Activated CD4-positive, alpha-beta memory T cell treated with anti-CD3 and anti-CD28 coated beads for 36 hours (primary cell): ENCODE measurements at regions of chr13 and their contacts with region 1.

Region 1: DNA sequence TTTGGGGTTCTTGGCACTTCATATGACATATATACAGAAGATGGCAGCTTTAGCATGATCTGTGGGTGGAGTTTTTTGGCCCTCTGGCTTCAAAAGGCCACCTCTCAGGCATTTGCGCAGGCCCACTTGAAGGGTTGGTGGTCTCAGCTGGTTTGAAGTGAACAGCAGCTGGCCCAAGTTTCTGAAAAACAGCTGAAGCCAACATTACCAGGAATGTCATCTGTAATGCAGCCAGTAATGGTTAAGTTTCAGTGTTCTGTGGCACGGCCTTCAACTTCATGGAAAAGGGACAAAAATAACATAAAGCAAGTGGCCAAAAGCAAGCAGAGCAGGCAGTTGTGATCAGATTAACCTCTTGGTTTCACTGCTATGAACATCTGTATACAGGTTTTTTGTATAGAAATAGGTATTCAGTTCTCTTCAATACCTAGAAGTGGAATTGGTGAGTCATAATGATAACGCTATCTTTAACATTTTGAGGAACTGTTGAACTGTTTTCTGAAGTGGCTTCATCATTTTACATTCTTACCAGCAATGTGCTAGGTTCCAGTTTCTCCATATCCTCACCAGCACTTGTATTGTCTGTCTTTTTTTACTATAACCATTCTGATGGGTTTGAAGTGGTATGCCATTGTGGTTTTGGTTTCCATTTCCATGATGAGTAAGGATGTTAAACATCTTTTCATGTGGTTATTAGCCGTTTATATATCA is 245.4 kb downstream of the SHISA2 start:
- DNase-seq: no peak
- H3K4me3 Mint-ChIP-seq: no peak overlapping the region
- H3K27ac Mint-ChIP-seq: no peak overlapping the region
- H3K4me1 Mint-ChIP-seq: peaks cover 9% of the 10 kb centered on the region
- H3K27me3 Mint-ChIP-seq: peaks cover 18% of the 10 kb centered on the region

Region 2: DNA sequence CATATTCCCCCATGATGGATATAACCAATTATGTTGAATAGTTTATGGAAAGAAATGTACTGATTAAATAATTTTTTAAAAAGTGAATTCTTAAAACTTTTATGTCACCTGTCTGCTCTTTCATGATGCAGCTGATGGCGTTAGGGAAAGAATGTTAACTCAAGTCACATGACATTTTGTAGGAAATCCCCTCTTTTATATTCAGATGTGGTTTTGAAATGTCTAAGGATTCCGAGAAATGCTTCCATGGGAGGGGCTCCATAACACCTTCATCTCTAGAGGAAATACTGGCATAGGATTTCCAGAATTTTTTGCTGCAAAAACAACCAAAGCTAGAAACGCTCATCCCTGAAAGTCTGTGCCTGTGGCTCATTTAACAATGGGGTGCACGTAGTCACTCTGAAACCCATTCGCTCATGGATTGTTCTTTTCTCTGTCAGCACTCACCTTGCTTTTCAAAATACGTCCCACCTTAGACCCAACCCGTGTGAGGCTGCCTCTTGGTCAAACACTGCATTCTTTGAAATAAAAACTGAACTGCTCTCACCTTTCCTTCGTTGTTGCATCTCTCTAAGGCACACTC is 43.5 kb before region 1 on chr13:
- CTCF ChIA-PET with region 1: no interaction called
- POLR2A ChIA-PET with region 1: no interaction called
- intact Hi-C with region 1: loop called (anchors 1 kb)
- DNase-seq: peak; percentile 11
- H3K4me3 Mint-ChIP-seq: no peak overlapping the region
- H3K27ac Mint-ChIP-seq: no peak overlapping the region
- H3K4me1 Mint-ChIP-seq: peaks cover 17% of the 10 kb centered on the region
- H3K27me3 Mint-ChIP-seq: no peaks in the 10 kb centered on the region

Region 3: GRCh38 chr13:25784119-25784518 is 22.3 kb before region 1 on chr13:
- CTCF ChIA-PET with region 1: no interaction called
- POLR2A ChIA-PET with region 1: no interaction called
- intact Hi-C with region 1: no loop called
- DNase-seq: no peak
- H3K4me3 Mint-ChIP-seq: no peak overlapping the region
- H3K27ac Mint-ChIP-seq: no peak overlapping the region
- H3K4me1 Mint-ChIP-seq: no peaks in the 10 kb centered on the region
- H3K27me3 Mint-ChIP-seq: no peaks in the 10 kb centered on the region